ENCODE measurements at regions of chr12 and their contacts with region 1.

Region 1: GRCh38 chr12:102948941-102949352 is 8.5 kb upstream of the ASCL1 start:
- DNase-seq: peak in 1 of 2 donors; percentile 23
- H3K4me3 ChIP-seq: no peak overlapping the region
- CTCF ChIP-seq: no peak
- POLR2A ChIP-seq: no peak

Region 2: GRCh38 chr12:103556890-103557627 is 608.1 kb after region 1 on chr12:
- intact Hi-C with region 1: loop called (anchors 10 kb)
- DNase-seq: peak in 1 of 2 donors; percentile 60
- H3K4me3 ChIP-seq: no peak overlapping the region
- CTCF ChIP-seq: no peak
- POLR2A ChIP-seq: no peak